ENCODE measurements at regions of chr1 and their contacts with region 1.

Region 1: GRCh38 chr1:89953072-89953626 is 41.8 kb upstream of the ZNF326 start:
- DNase-seq: peak; percentile 33
- ATAC-seq: peak; percentile 87
- H3K4me3 ChIP-seq: no peak overlapping the region
- H3K27ac ChIP-seq: 0 out of 2 replicates have a peak overlapping the region, but pooled peaks have one; percentile 31
- H3K4me1 ChIP-seq: peaks cover 19% of the 10 kb centered on the region
- H3K27me3 ChIP-seq: no peaks in the 10 kb centered on the region
- CTCF ChIP-seq: peak; percentile 13 to 57 (median 37); a peak in 4 of 6 replicates
- EP300 ChIP-seq: no peak
- POLR2A ChIP-seq: no peak
- RAD21 ChIP-seq: peak; percentile 79

Region 2: GRCh38 chr1:89804642-89805237 is 148.4 kb before region 1 on chr1:
- CTCF ChIA-PET with region 1: interaction called, 5 read pairs
- POLR2A ChIA-PET with region 1: no interaction called
- RAD21 ChIA-PET with region 1: interaction called, 4 read pairs
- SMC1A ChIA-PET with region 1: interaction called, 4 read pairs
- in situ Hi-C with region 1: no loop called
- intact Hi-C with region 1: loop called (anchors 1 kb)
- DNase-seq: peak; percentile 69
- ATAC-seq: peak; percentile 94
- H3K4me3 ChIP-seq: no peak overlapping the region
- H3K27ac ChIP-seq: no peak overlapping the region
- H3K4me1 ChIP-seq: peaks cover 10% of the 10 kb centered on the region
- H3K27me3 ChIP-seq: no peaks in the 10 kb centered on the region; a peak in 1 of 4 replicates
- CTCF ChIP-seq: peak; percentile 86 to 96 (median 88)
- EP300 ChIP-seq: no peak
- POLR2A ChIP-seq: no peak
- RAD21 ChIP-seq: peak; percentile 99

Region 3: GRCh38 chr1:89965193-89965768 is 12.1 kb after region 1 on chr1:
- CTCF ChIA-PET with region 1: interaction called, 3 read pairs
- POLR2A ChIA-PET with region 1: interaction called, 11 read pairs
- RAD21 ChIA-PET with region 1: no interaction called
- SMC1A ChIA-PET with region 1: interaction called, 6 read pairs
- in situ Hi-C with region 1: no loop called
- intact Hi-C with region 1: no loop called
- DNase-seq: no peak
- ATAC-seq: no peak
- H3K4me3 ChIP-seq: no peak overlapping the region
- H3K27ac ChIP-seq: no peak overlapping the region
- H3K4me1 ChIP-seq: peaks cover 10% of the 10 kb centered on the region; the same call in 1 of the 2 replicates
- H3K27me3 ChIP-seq: no peaks in the 10 kb centered on the region
- CTCF ChIP-seq: no peak
- EP300 ChIP-seq: no peak
- POLR2A ChIP-seq: no peak
- RAD21 ChIP-seq: no peak